ENCODE measurements at regions of chr21 and their contacts with region 1.

Region 1: DNA sequence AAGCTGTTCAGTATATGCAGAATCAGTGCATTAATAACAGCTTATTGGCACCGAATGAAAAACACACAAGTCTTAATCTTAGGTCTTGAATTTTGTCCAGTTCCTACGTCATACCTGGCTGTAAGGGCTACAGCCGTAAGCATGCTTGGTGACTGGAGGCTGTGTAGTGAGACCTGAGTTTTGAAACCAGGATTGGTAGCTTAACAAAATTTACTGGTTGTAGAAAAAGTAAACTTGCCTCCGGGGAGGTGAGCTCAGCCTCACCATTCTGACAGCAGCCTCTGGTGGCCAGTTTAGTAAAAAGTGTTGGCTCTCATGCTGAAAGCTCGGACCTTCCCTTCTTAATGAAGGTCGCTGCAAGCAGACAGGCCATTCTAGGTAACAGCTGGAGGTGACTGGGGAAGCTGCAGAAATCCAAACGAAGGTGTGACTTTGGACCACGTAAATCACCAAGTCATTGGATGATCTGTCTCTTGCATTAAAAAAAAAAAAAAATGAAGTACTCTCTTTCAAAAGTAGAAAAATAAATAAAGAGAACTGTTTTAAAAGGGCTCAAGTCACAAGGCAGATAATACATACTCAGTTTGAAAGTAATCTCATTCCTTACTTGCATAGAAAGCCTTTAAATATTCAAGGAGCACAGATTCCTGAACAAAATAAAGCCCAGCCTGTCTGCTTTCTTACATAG is 48.9 kb downstream of the HLCS start:
- DNase-seq: no peak
- ATAC-seq: no peak
- H3K4me3 Mint-ChIP-seq: no peak overlapping the region
- H3K27ac Mint-ChIP-seq: no peak overlapping the region
- H3K4me1 Mint-ChIP-seq: peaks cover 4% of the 10 kb centered on the region
- H3K27me3 Mint-ChIP-seq: no peaks in the 10 kb centered on the region

Region 2: DNA sequence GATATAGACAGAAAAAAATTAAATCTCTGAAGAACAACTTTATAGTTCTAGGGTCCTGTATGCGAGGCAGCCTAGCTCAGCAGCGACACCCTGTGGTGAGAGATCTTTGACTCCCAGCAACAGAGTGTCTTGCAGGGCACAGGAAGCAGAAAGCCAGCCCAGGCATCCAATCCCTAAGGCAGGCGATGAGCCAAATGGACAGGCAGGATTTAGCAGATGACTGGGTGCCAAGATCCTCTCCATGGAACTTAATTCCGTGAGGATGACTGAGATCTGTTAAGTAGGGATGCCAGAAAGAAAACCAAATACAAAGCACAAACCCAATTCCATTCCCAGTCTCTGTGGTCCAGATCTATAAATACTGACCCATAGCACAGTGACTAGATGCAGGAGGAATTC is 10.1 kb after region 1 on chr21:
- CTCF ChIA-PET with region 1: interaction called, 11 read pairs
- POLR2A ChIA-PET with region 1: no interaction called
- DNase-seq: peak; percentile 83
- ATAC-seq: peak; percentile 65
- H3K4me3 Mint-ChIP-seq: no peak overlapping the region
- H3K27ac Mint-ChIP-seq: no peak overlapping the region
- H3K4me1 Mint-ChIP-seq: no peaks in the 10 kb centered on the region
- H3K27me3 Mint-ChIP-seq: no peaks in the 10 kb centered on the region

Region 3: GRCh38 chr21:37199057-37199924 is 281.7 kb after region 1 on chr21:
- CTCF ChIA-PET with region 1: no interaction called
- POLR2A ChIA-PET with region 1: no interaction called
- DNase-seq: no peak
- ATAC-seq: no peak
- H3K4me3 Mint-ChIP-seq: no peak overlapping the region
- H3K27ac Mint-ChIP-seq: no peak overlapping the region
- H3K4me1 Mint-ChIP-seq: no peaks in the 10 kb centered on the region
- H3K27me3 Mint-ChIP-seq: no peaks in the 10 kb centered on the region